Posterior vena cava (tissue), 2 donors: ENCODE measurements at regions of chr4 and their contacts with region 1.

Region 1: DNA sequence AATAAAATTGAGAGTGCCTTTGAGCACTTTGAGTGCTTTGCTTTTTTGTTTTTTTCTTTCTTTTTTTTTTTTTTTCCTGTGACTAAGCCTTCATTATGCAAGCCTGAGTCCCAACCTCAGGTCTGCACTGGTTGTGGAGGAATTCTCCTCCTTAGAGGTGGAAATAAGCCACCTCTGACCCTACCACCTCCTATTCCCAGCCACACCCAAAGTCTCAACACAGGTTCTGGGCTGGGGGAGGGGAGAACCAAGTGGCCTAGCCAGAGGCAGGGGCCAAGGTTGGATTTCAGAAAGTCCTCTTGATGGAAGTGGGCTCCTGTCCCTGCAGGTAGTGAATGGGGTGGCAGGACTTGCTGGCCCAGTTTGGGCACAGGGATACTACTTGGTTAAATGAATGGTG is 180.2 kb downstream of the ARAP2 start:
- DNase-seq: no peak

Region 2: GRCh38 chr4:35900286-35901243 is 163.6 kb before region 1 on chr4:
- intact Hi-C with region 1: no loop called
- DNase-seq: no peak

Region 3: GRCh38 chr4:35993606-35994005 is 70.5 kb before region 1 on chr4:
- intact Hi-C with region 1: no loop called
- DNase-seq: no peak

Region 4: GRCh38 chr4:36006226-36006625 is 57.9 kb before region 1 on chr4:
- intact Hi-C with region 1: loop called in 1 of 2 experiments (anchors 2 kb)
- DNase-seq: no peak